ENCODE measurements at regions of chr1 and their contacts with region 1.

Region 1: DNA sequence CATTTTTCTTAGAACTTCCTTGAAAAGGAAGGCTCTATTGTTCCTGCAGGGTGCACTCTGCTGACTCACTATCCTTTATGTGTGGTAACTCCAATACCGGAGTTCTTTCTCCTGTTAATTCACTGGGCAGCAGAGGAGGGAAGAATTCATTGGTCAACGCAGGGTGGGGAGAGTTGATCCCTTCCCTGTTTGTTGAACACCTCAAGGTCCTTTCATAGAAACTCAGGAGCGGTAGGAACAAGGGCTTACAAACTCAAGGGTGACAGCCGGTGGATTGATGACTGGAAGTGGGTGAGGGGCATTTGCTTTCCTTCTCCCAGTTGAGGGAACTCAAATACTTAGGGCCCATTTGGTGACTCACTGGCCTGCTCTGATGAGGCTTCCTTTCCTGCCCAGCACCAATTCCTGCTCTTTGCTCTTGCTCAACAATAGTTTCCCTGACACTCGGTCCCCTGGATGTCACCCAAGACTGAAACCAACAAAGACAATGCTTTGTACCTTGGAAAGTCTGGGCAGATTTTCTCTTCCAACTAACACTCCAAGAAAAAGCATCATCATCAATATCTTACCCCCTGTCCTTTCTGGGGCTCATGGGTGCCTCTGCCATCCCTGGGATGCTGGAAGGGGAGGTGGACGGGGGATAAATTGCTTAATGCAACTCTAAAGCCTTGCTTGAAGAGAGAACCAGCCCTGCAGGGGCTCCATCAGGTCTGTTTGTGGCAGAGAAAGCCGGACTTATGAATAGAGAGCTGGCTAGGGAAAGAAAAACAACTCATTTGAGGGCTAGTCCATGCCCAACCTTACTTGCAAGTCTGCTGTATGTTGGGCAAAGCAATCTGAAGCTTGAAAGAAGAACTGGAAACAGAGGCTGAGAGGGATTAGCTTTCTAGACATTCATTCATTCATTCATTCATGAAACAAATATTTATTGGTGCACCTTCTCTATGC is 9.3 kb downstream of the SLC26A9 start:
- DNase-seq: peak; percentile 57 to 64
- H3K4me3 ChIP-seq: no peak overlapping the region
- H3K4me1 ChIP-seq: peaks cover 11% of the 10 kb centered on the region
- H3K27me3 ChIP-seq: no peaks in the 10 kb centered on the region

Region 2: DNA sequence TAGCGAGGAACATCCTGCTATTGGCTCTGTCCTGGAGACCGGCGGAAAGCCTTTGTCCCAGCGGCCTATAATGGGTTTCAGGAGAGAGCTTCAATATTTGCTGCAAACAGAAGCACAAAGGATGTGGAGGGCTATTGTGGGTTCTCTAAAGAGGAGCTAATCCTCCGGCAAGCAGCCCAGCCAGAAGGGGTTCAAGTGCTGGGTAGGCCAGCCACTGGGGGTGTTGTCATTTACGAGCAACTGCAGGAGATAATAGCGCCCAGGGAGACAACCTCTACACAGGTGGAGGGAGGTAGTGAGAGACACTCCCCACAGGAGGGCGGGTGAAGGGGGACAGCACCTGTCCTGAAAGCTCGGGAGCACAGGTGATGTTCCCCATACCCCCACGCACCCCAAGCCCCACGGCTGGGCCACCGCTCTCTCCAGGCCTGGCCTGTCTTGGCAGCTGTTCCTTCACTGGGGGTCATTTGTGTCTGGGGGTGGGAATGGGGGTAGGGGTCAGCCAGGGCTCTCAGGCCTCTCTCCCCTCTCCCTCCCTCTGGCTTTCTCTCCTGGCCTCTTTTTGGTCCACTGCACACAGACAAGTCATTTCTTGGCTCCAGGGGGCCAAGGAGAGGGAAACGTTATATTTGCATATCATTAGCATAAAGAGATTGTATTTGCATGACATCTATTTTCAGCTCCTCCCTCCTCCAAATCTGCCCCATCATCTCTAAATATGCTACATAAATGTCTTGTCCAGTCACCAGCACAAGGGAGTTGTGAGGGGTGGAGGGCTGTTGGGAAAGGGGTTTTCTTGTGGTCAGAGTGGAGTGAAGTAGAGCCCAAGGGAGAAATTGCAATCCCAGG is 31.3 kb after region 1 on chr1:
- in situ Hi-C with region 1: loop called (anchors 5 kb)
- DNase-seq: no peak
- H3K4me3 ChIP-seq: no peak overlapping the region
- H3K4me1 ChIP-seq: no peaks in the 10 kb centered on the region
- H3K27me3 ChIP-seq: 0 out of 2 replicates have a peak, but pooled peaks cover 4% of the 10 kb centered on the region

Measured in HAP-1 (cell line).